ENCODE measurements at regions of chr18 and their contacts with region 1.

Region 1: DNA sequence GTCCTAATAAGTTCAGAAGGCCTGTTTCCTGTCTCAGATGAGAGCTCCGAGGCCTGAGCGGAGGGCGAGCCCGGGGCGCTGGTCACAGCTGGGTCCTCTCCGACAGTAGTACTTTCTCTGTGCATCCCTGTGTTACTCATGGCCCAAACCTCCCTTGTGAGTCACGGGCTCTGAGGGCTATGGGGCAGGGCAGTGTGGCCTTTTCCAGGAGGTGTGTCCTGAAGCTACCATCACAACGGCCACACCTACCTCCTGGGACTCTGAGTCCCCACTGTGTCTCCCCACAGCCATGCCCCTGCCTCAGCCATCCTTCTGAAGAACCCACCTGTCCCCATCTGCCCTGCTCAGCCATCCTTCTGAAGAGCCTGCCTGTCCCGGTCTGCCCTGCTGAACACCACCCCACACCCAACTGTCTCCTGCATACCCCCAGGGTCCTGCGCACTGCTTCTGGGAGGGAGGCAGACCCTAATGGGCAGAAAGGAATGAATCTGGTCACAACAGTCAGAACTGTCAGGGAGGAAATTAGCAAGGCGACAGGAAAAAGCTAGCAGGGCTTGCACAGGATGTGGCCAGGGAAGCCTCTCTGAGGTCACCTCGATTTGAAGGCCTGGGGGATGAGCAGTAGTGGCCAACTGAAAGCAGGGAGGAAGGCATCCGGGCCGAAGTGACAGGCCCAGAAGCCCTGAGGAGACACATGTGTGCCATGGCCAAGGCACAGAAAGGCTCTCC is 145.4 kb upstream of the RIOK3 start:
- DNase-seq: peak; percentile 36
- H3K4me3 Mint-ChIP-seq: no peak overlapping the region
- H3K27ac Mint-ChIP-seq: peak overlapping the region; percentile 78
- H3K4me1 Mint-ChIP-seq: peaks cover 43% of the 10 kb centered on the region
- H3K27me3 Mint-ChIP-seq: no peaks in the 10 kb centered on the region

Region 2: GRCh38 chr18:23356915-23357601 is 49.3 kb after region 1 on chr18:
- intact Hi-C with region 1: loop called (anchors 5 kb)
- DNase-seq: no peak
- H3K4me3 Mint-ChIP-seq: no peak overlapping the region
- H3K27ac Mint-ChIP-seq: no peak overlapping the region
- H3K4me1 Mint-ChIP-seq: peaks cover 39% of the 10 kb centered on the region
- H3K27me3 Mint-ChIP-seq: no peaks in the 10 kb centered on the region

Measured in activated T-helper 2 cell treated with anti-CD3 and anti-CD28 coated beads, Interferon-gamma antibody, Interleukin-2, Interleukin-4, amounts not matched to agents 10 μg/mL and 5 μg/mL and 100 μg/mL, durations not matched to agents 14 hours and 24 hours and 36 hours (primary cell).